ENCODE measurements at regions of chr12 and their contacts with region 1.

Region 1: GRCh38 chr12:55973598-55974307 is at the start of gene RAB5B:
- DNase-seq: peak; percentile 94
- CTCF ChIP-seq: no peak

Region 2: GRCh38 chr12:55681142-55682077 is 292.3 kb before region 1 on chr12:
- CTCF ChIA-PET with region 1: no interaction called
- POLR2A ChIA-PET with region 1: no interaction called
- DNase-seq: no peak
- CTCF ChIP-seq: peak; percentile 14

Region 3: GRCh38 chr12:55991110-55991509 is 17.4 kb after region 1 on chr12:
- CTCF ChIA-PET with region 1: interaction called, 38 read pairs
- POLR2A ChIA-PET with region 1: interaction called, 11 read pairs
- DNase-seq: no peak
- CTCF ChIP-seq: no peak

Region 4: DNA sequence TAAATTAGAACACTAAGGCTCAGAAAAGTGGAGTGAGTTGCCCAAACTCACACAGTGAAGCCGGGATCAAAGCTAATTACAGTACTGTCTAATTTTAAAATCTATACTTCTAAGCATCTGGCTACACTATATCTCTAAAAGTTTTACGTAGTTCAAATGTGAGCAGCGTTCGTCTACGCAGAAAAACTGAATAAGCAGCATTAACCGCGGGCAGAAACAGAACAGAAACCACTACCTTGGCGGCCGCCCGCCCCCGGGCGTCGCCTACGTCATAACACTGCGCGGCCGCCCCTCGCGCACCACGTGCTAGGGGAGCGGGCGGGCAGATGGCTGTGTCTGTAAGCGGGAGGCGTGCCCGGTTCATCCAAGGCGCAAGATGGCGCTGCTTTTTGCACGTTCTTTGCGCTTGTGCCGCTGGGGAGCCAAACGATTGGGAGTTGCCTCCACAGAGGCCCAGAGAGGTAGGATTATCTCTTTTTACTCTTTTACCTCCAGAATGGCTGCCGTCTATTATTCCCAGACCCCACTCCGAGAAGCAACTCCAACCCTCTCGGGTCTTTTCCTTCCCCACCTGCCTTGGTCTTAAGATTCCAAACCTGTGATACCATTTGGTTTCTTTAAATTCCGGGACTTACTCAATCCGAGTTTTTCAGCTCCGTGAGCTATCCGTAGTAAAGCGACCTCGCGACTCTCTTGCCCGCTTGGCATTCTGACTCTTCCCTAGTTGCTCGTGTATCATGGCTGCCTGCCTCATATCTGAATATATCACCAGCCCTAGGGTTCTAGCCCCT is 494.7 kb after region 1 on chr12 and contains the start of gene SPRYD4:
- CTCF ChIA-PET with region 1: no interaction called
- POLR2A ChIA-PET with region 1: no interaction called
- DNase-seq: peak; percentile 96
- CTCF ChIP-seq: peak; percentile 63

Measured in GM10248 (cell line).